T-cell (primary cell): ENCODE measurements at regions of chr19 and their contacts with region 1.

Region 1: GRCh38 chr19:5142370-5143029 is 173.6 kb downstream of the KDM4B start:
- DNase-seq: no peak
- ATAC-seq: no peak
- H3K4me3 ChIP-seq: no peak overlapping the region
- H3K4me3 Mint-ChIP-seq: no peak overlapping the region
- H3K27ac ChIP-seq: no peak overlapping the region
- H3K27ac Mint-ChIP-seq: no peak overlapping the region
- H3K4me1 ChIP-seq: peaks cover 13 to 58% of the 10 kb centered on the region in 2 experiments
- H3K4me1 Mint-ChIP-seq: peaks cover 33 to 46% (median 39%) of the 10 kb centered on the region in 3 donors
- H3K27me3 ChIP-seq: peaks cover 0 to 2% of the 10 kb centered on the region in 2 experiments
- H3K27me3 Mint-ChIP-seq: no peaks in the 10 kb centered on the region

Region 2: GRCh38 chr19:3950871-3951861 is 1191.3 kb before region 1 on chr19:
- CTCF ChIA-PET with region 1: no interaction called
- POLR2A ChIA-PET with region 1: interaction called in 1 of 2 experiments, 10 read pairs
- DNase-seq: peak in 3 of 35 experiments; percentile 3 to 20 (median 10)
- ATAC-seq: peak in 3 of 4 experiments; percentile 32 to 64 (median 42)
- H3K4me3 ChIP-seq: peak overlapping the region; percentile 9 to 58
- H3K4me3 Mint-ChIP-seq: peak overlapping the region; percentile 34 to 81 (median 70)
- H3K27ac ChIP-seq: no peak overlapping the region
- H3K27ac Mint-ChIP-seq: peak overlapping the region in 1 of 2 donors; percentile 90
- H3K4me1 ChIP-seq: peaks cover 2 to 20% of the 10 kb centered on the region in 2 experiments
- H3K4me1 Mint-ChIP-seq: peaks cover 5 to 10% (median 9%) of the 10 kb centered on the region in 3 donors
- H3K27me3 ChIP-seq: peaks cover 0 to 38% of the 10 kb centered on the region in 2 experiments
- H3K27me3 Mint-ChIP-seq: peaks cover 0 to 9% of the 10 kb centered on the region in 2 donors

Region 3: DNA sequence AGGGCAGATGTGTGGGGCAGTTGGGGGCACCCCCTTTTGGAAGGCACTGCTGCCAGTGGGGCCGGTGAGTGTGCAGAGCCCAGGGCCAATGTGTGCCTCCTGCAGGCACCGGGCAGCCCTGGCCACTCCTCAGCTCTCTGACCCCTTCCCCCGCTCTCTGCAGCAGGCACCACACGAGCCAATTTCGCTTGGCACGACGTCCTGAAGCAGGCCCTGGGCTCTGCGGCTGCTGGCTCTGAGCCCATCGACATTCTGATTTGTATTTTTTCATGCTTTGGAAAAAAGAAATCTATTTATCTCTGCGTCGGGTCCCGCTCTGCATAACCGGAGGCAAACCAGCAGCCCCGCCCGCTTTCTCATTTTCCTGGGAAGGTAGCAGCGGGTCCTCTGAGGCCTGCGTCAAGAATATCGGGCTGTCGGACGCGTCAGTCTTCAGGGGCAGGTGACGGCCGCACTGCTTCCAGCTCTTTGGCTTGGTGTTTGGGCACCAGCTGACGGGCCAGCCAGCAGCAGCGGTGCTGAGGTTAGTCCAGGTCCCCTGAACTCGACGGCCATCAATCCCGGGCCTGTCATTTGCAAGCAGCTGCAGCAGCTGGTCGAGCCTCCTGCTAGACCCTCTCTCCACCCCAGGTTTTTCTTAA is 39.3 kb before region 1 on chr19:
- CTCF ChIA-PET with region 1: no interaction called
- POLR2A ChIA-PET with region 1: no interaction called
- DNase-seq: no peak
- ATAC-seq: no peak
- H3K4me3 ChIP-seq: no peak overlapping the region
- H3K4me3 Mint-ChIP-seq: no peak overlapping the region
- H3K27ac ChIP-seq: no peak overlapping the region
- H3K27ac Mint-ChIP-seq: no peak overlapping the region
- H3K4me1 ChIP-seq: no peaks in the 10 kb centered on the region
- H3K4me1 Mint-ChIP-seq: no peaks in the 10 kb centered on the region
- H3K27me3 ChIP-seq: no peaks in the 10 kb centered on the region
- H3K27me3 Mint-ChIP-seq: no peaks in the 10 kb centered on the region

Region 4: GRCh38 chr19:5170329-5170745 is 27.8 kb after region 1 on chr19:
- CTCF ChIA-PET with region 1: no interaction called
- POLR2A ChIA-PET with region 1: no interaction called
- DNase-seq: peak in 27 of 35 experiments; percentile 9 to 59 (median 38)
- ATAC-seq: peak in 1 of 4 experiments; percentile 20
- H3K4me3 ChIP-seq: no peak overlapping the region
- H3K4me3 Mint-ChIP-seq: no peak overlapping the region
- H3K27ac ChIP-seq: no peak overlapping the region
- H3K27ac Mint-ChIP-seq: no peak overlapping the region
- H3K4me1 ChIP-seq: no peaks in the 10 kb centered on the region
- H3K4me1 Mint-ChIP-seq: peaks cover 4 to 6% (median 6%) of the 10 kb centered on the region in 3 donors
- H3K27me3 ChIP-seq: no peaks in the 10 kb centered on the region
- H3K27me3 Mint-ChIP-seq: peaks cover 2 to 8% of the 10 kb centered on the region in 2 donors